Sciatic nerve (tissue), 2 donors: ENCODE measurements at regions of chr12 and their contacts with region 1.

Region 1: DNA sequence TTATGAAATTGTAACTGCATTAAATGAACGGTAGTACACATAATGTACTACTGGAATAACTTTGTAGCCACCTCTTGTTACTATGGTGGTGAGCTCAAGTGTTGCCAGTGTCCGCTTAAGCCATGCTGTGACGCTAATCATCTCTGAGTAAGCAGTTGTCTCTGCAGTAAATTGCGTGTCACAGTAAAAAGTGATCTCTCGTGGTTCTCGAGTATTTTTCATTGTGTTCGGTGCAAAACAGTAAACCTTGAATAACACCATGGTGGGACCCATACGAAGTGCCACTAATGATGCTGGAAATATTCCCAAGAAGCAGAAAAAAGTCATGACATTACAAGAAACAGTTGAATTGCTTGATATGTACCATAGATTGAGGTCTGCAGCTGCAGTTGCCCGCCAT is 524.8 kb downstream of the SOX5 start:
- DNase-seq: no peak
- ATAC-seq: no peak

Region 2: GRCh38 chr12:22105542-22105941 is 1319.1 kb before region 1 on chr12:
- intact Hi-C with region 1: no loop called
- DNase-seq: no peak
- ATAC-seq: no peak

Region 3: GRCh38 chr12:25074954-25075353 is 1650.3 kb after region 1 on chr12:
- intact Hi-C with region 1: loop called (anchors 5 kb)
- DNase-seq: no peak
- ATAC-seq: no peak